GM23248 (cell line): ENCODE measurements at regions of chr20 and their contacts with region 1.

Region 1: GRCh38 chr20:23765578-23765977 is 14.8 kb upstream of the CST1 start:
- DNase-seq: no peak
- H3K4me3 ChIP-seq: no peak overlapping the region
- H3K27ac ChIP-seq: no peak overlapping the region
- H3K4me1 ChIP-seq: no peaks in the 10 kb centered on the region
- H3K27me3 ChIP-seq: peaks cover 10% of the 10 kb centered on the region

Region 2: GRCh38 chr20:23235173-23236027 is 530.2 kb before region 1 on chr20:
- in situ Hi-C with region 1: no loop called
- DNase-seq: peak; percentile 74
- H3K4me3 ChIP-seq: no peak overlapping the region
- H3K27ac ChIP-seq: no peak overlapping the region
- H3K4me1 ChIP-seq: peaks cover 21% of the 10 kb centered on the region
- H3K27me3 ChIP-seq: no peaks in the 10 kb centered on the region

Region 3: DNA sequence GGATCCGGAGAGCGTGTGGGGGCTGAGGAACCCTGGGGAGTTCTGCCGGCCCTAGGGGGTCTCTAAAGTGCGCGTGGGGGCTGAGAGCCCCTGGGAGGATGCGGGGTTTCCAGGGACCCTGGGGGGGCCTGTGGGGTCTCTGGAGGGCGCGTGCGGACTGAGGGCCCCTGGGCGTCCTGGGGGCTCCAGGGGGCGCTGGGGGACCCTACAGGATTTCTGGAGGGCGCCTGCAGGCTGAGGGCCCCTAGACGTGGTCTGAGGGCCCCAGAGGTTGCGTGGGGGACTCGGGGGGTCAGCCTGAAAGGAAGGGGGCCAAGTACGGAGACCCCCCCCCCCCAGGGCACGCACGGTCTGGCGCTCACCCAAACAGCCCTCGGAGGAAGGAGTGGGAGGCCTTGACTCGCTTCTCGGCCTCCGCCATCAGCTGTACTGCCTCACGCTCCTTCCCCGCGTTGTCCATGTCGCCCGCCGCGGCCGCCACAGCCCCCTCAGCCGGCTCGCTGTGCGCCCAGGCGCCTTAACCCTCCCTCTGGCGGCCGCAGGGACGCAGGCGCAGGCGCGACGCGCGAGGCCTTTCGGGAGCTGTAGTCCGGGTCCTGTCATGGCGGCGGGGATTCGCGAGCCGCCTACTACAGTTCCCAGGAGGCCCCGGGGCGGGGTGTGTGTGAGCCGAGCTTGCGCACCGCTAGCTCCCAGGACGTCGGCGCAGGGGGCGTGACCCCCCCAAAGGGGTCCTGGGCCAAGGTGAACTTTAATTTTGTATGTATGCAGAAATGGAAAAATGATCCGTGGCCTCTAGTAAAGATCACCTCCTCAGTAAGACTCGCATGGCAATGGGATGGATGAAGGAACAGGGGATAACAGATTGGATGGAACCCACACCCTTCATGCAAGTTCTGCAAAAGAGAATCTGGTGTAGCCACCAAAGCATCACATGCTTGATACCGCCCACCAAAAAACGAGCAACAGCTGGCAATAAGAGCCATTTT is 344.3 kb before region 1 on chr20 and contains the start of gene NAPB:
- in situ Hi-C with region 1: no loop called
- DNase-seq: peak; percentile 98
- H3K4me3 ChIP-seq: peak within 1 kb of the TSS; percentile 83
- H3K27ac ChIP-seq: peak within 1 kb of the TSS; percentile 80
- H3K4me1 ChIP-seq: peaks cover 10% of the 10 kb centered on the region
- H3K27me3 ChIP-seq: no peaks in the 10 kb centered on the region
- total RNA-seq, gene NAPB: 8.1 and 9.9 TPM in 2 replicates

Region 4: DNA sequence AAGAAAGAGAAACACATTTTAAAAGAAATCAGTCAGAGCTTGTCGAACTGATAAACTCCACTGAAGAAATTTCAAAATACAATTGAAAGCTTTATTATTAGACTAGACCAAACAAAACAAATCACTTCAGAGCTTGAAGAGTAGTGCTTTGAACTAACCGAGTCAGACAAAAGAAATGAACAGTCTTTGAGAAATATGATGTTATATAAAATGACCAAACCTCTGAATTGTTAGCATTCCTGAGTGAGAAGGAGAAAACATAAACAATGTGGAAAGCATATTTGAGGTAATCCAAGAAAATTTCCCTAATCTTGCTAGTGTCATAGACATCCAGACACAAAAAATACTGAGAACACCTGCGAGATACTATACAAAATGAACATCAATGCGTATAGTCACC is 63.6 kb before region 1 on chr20:
- in situ Hi-C with region 1: loop called (anchors 10 kb)
- DNase-seq: no peak
- H3K4me3 ChIP-seq: no peak overlapping the region
- H3K27ac ChIP-seq: no peak overlapping the region
- H3K4me1 ChIP-seq: no peaks in the 10 kb centered on the region
- H3K27me3 ChIP-seq: peaks cover 25% of the 10 kb centered on the region